ENCODE measurements at regions of chr17 and their contacts with region 1.

Region 1: GRCh38 chr17:48944519-48945260 is at the start of gene SNF8:
- DNase-seq: peak; percentile 96
- H3K4me3 ChIP-seq: peak within 1 kb of the TSS; percentile 91 to 93 (median 92)
- H3K27ac ChIP-seq: peak within 1 kb of the TSS; percentile 84 to 93 (median 88)
- H3K4me1 ChIP-seq: peaks cover 18 to 35% (median 28%) of the 10 kb centered on the region in 4 donors
- H3K27me3 ChIP-seq: peaks cover 0 to 10% (median 0%) of the 10 kb centered on the region in 4 donors
- CTCF ChIP-seq: no peak
- EP300 ChIP-seq: no peak
- POLR2A ChIP-seq: peak; percentile 62
- total RNA-seq, gene SNF8: 80.6 to 97.1 (median 92.3) TPM

Region 2: DNA sequence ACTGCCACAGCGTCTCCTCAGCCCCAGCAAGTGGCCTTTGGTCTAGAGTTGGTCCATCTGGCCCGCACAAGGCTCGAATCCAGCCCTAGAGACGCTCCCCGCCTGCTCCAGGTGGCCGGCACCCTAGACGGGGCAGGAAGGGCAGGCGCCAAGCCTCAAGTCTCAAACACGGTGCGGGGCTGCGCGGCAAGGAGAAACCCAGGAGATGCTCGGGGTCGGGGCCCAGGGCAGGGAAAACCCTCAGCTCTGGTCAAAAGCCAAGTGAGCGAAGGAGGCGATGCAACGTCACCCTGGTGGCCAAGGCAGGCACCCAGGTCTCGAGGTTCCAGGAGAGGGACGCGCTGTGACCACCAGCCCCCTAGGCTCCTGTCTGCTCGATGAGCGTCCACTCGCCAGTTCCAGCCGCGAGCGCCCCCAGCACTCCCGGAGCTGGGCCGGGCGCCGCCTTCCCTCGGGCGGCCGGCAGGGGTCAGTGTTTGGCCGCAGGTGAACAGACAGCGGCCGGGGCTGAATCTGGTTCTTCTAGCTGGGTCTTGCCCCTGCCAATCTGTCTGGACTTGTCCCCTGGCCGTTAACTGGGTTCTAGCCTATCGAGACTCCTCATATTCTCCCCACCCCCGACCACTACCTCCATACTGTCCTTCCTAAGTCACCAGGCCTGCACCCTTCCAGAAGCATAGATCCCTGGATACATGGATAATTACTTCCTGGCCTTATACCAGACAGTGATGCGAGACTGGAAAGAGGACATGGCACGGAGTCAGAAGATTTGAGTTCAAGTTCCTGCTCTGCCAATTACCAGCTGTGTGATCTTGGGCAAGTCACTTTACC is 266.3 kb before region 1 on chr17:
- intact Hi-C with region 1: no loop called
- DNase-seq: no peak
- H3K4me3 ChIP-seq: peak overlapping the region in 1 of 4 donors; percentile 21
- H3K27ac ChIP-seq: no peak overlapping the region
- H3K4me1 ChIP-seq: peaks cover 0 to 9% (median 8%) of the 10 kb centered on the region in 4 donors
- H3K27me3 ChIP-seq: peaks cover 0 to 72% (median 9%) of the 10 kb centered on the region in 4 donors
- CTCF ChIP-seq: peak; percentile 83 to 95 (median 93)
- EP300 ChIP-seq: no peak
- POLR2A ChIP-seq: no peak

Region 3: DNA sequence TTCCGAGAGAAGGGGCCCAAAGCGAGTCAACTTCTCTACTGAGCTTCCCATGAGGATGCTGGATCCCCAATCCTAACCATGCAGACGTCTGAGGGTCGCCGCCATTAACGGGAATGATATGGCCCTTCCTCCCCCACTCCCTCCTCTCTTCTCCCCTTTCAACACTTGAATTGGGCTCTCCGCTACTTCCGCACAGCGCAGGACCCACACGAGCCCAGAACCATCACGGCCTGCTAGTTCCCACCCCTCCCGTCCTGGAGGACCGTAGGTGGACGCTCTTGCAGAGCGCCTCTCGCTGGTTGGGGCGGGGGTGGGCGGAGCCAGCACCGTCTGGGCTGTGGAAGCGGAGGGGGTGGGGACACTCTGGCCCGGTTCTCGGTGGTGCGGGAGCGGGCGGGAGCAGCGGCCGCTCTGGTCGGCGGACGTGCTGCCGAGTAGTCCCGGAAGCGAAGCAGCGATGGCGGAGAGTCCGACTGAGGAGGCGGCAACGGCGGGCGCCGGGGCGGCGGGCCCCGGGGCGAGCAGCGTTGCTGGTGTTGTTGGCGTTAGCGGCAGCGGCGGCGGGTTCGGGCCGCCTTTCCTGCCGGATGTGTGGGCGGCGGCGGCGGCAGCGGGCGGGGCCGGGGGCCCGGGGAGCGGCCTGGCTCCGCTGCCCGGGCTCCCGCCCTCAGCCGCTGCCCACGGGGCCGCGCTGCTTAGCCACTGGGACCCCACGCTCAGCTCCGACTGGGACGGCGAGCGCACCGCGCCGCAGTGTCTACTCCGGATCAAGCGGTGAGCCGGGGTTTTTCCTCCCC is 36.4 kb before region 1 on chr17 and contains the start of gene UBE2Z:
- intact Hi-C with region 1: loop called (anchors 5 kb)
- DNase-seq: peak; percentile 99
- H3K4me3 ChIP-seq: peak within 1 kb of the TSS; percentile 86 to 100 (median 96)
- H3K27ac ChIP-seq: peak within 1 kb of the TSS; percentile 91 to 93 (median 92)
- H3K4me1 ChIP-seq: peaks cover 39 to 45% (median 41%) of the 10 kb centered on the region in 4 donors
- H3K27me3 ChIP-seq: no peaks in the 10 kb centered on the region
- CTCF ChIP-seq: peak in 1 of 3 experiments; percentile 22
- EP300 ChIP-seq: no peak
- POLR2A ChIP-seq: peak; percentile 74
- total RNA-seq, gene UBE2Z: 46.4 to 76.4 (median 62.9) TPM

Region 4: DNA sequence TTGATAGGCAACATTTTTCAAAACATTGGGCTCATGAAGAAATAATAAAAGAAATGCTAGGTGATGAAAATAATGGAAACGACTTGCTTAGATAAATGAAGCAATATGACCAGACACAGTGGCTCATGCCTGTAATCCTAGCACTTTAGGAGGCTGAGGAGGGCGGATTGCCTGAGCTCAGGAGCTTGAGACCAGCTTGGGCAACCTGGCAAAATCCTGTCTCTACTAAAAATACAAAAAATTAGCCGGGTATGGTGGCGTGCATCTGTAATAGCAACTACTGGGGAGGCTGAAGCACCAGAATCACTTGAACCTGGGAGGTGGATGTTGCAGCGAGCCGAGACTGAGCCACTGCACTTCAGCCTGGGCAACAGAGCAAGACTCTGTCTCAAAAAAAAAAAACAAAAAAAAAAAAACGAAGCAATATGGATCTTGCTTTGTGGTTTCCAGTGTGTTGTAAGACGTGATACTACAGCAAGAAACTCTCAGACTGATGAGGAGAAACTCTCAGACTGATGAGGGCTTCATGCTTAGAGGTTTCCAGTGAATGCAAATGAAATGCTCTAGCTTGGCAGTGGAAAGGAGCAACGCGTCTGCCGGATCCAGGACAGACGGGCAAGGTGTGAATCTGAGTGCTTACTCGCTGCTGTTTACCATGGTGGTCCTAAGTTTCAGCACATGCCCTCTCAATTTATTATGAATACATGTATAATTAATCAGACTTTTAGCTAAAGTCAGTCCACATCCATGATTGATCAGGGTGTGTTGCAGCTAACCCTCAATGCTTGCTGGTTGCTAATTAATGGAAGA is 41.0 kb after region 1 on chr17:
- intact Hi-C with region 1: no loop called
- DNase-seq: peak; percentile 75
- H3K4me3 ChIP-seq: no peak overlapping the region
- H3K27ac ChIP-seq: no peak overlapping the region
- H3K4me1 ChIP-seq: no peaks in the 10 kb centered on the region
- H3K27me3 ChIP-seq: peaks cover 0 to 96% (median 11%) of the 10 kb centered on the region in 4 donors
- CTCF ChIP-seq: no peak
- EP300 ChIP-seq: no peak
- POLR2A ChIP-seq: no peak

Region 5: GRCh38 chr17:48997083-48997826 is 52.6 kb after region 1 on chr17 and contains the start of gene IGF2BP1:
- intact Hi-C with region 1: no loop called
- DNase-seq: peak; percentile 68
- H3K4me3 ChIP-seq: peak within 1 kb of the TSS; percentile 16 to 45 (median 32)
- H3K27ac ChIP-seq: no peak within 1 kb of the TSS
- H3K4me1 ChIP-seq: peaks cover 30 to 37% (median 33%) of the 10 kb centered on the region in 4 donors
- H3K27me3 ChIP-seq: peaks cover 16 to 100% (median 86%) of the 10 kb centered on the region in 4 donors
- CTCF ChIP-seq: no peak
- EP300 ChIP-seq: no peak
- POLR2A ChIP-seq: no peak
- total RNA-seq, gene IGF2BP1: not detected

Region 6: DNA sequence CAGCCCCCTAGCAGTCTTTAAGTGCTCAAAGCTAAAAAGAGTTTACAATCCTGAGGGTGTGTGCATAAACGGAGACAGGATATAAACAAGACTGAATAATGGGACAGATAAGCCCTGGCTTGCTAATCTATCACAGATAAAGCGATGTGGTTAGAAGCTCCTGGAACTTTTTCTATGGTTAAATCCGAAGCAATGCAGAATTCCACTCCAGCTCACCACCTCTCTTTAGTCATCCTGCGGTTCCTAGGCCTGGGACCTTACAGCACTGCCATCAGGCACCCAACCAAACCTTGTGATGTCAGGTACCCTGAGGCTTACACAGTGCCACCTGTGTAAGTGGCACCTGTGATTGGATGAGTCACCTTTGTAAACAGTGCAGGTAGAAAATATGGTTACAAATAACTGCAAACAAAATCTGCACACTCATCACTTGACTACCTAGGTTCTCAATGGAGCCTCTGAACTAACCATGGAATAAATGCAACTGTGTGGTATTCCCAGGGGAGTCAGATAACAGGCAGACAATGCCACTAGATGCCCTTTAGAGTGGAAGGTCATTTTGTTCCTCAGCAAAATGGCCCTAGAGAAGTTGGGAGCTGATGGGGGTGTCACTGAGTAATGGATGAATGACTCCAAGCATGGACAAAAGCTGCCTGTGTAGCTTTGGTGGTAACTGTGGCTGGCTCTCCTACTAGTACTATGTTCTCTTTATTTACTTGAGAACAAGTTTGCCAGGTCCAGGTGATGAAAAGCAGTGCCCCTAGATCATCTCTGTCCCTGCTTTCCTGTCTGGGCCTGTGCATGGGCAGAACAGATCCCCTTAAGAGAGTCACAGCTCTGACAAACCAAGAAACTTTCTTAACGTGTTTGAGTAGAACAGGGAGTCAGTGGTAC is 156.6 kb after region 1 on chr17:
- intact Hi-C with region 1: no loop called
- DNase-seq: no peak
- H3K4me3 ChIP-seq: no peak overlapping the region
- H3K27ac ChIP-seq: no peak overlapping the region
- H3K4me1 ChIP-seq: no peaks in the 10 kb centered on the region
- H3K27me3 ChIP-seq: peaks cover 0 to 16% (median 0%) of the 10 kb centered on the region in 4 donors
- CTCF ChIP-seq: no peak
- EP300 ChIP-seq: no peak
- POLR2A ChIP-seq: no peak